ENCODE measurements at regions of chr22 and their contacts with region 1.

Region 1: GRCh38 chr22:37498289-37498909 is 12.2 kb upstream of the MFNG start:
- DNase-seq: peak; percentile 62 to 71 (median 71)
- H3K4me3 ChIP-seq: no peak overlapping the region
- H3K27ac ChIP-seq: no peak overlapping the region
- H3K4me1 ChIP-seq: peaks cover 0 to 22% (median 19%) of the 10 kb centered on the region in 4 experiments
- H3K27me3 ChIP-seq: no peaks in the 10 kb centered on the region

Region 2: DNA sequence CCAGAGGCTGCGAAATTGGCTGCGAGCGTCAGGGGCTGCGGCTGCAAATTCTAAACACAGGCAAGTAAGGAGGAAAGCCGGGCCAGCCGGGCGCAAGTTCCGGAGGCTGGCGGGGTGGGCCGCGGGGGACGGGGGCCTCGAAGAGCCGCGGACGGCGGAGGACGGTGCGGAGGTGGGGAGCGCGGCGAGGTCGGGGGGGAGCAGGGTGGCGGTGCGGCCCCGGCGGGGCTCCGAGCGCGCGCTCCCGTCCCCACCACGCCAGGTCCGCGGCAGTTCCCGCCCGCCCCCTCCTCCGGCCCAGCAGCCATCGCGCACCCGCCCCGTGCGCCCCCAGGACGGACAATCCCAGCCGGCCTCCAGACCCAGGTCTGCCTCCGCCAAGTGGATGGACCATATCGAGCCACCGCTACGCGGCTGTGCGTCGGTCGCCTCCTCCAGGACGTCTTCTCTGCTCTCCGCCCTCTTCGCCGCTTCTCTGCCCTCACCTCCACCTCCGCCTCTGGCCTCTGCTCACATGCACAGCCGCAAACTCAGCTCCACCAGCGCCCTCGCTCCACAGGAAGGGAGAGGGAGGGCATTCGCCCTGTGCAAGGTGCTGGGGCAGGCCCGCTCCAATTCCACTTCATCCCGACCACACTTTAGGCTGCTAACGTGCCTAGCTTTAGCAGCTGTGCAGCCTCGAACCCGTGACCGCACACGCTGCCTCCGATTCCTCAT is 78.3 kb before region 1 on chr22:
- CTCF ChIA-PET with region 1: no interaction called
- POLR2A ChIA-PET with region 1: no interaction called
- DNase-seq: peak in 2 of 3 donors; percentile 51 to 54
- H3K4me3 ChIP-seq: peak overlapping the region in 4 of 7 experiments; percentile 35 to 66 (median 58)
- H3K27ac ChIP-seq: no peak overlapping the region
- H3K4me1 ChIP-seq: peaks cover 0 to 41% (median 34%) of the 10 kb centered on the region in 4 experiments
- H3K27me3 ChIP-seq: peaks cover 0 to 53% (median 20%) of the 10 kb centered on the region in 5 experiments

Region 3: GRCh38 chr22:37486224-37486845 is 12.1 kb before region 1 on chr22 and contains the start of gene MFNG:
- CTCF ChIA-PET with region 1: interaction called, 26 read pairs
- POLR2A ChIA-PET with region 1: interaction called, 3 read pairs
- DNase-seq: peak; percentile 61 to 89 (median 81)
- H3K4me3 ChIP-seq: peak within 1 kb of the TSS; percentile 41 to 93 (median 81)
- H3K27ac ChIP-seq: peak within 1 kb of the TSS; percentile 77 to 87
- H3K4me1 ChIP-seq: peaks cover 3 to 63% (median 56%) of the 10 kb centered on the region in 4 experiments
- H3K27me3 ChIP-seq: no peaks in the 10 kb centered on the region

Region 4: GRCh38 chr22:37544955-37545699 is 46.7 kb after region 1 on chr22:
- CTCF ChIA-PET with region 1: no interaction called
- POLR2A ChIA-PET with region 1: no interaction called
- DNase-seq: peak; percentile 54 to 69 (median 61)
- H3K4me3 ChIP-seq: no peak overlapping the region
- H3K27ac ChIP-seq: no peak overlapping the region
- H3K4me1 ChIP-seq: peaks cover 0 to 25% (median 22%) of the 10 kb centered on the region in 4 experiments
- H3K27me3 ChIP-seq: peaks cover 0 to 26% (median 9%) of the 10 kb centered on the region in 5 experiments

Region 5: DNA sequence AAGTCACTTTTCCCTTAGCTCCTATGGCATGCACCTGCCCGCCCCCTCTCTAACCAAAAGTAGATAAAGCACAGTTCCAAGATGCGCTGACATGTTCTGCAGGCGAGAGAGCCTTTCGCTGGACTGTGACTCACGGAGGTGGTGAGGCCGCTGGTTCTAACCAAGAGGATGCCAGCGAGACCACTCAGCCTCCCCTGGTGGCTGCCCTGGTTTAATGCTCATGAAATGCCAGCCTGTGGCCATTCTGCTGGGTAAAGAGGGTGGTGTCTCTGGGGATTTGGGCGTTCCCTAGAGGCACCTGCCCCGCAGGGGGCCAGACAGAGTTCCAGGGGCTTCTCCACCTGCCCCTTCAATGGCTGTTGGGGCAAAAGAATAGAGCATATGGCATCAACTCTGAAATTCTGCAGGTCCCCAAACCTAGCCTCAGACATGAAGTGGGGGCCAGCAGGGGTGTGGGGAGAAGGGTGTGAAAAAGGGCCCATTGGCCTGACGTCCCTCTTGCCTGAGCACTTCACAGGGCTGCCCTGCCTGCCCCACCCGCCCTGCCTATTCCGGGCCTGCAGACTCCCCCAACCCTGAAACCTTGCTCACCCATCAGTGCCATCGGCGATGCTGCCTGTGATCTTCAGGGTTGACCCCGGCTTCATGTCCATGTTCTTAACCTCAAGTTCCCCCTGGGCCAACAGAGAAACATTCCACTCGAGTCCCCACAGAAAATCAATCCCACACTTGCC is 73.0 kb after region 1 on chr22:
- CTCF ChIA-PET with region 1: no interaction called
- POLR2A ChIA-PET with region 1: no interaction called
- DNase-seq: peak; percentile 25 to 57 (median 46)
- H3K4me3 ChIP-seq: no peak overlapping the region
- H3K27ac ChIP-seq: no peak overlapping the region
- H3K4me1 ChIP-seq: peaks cover 3 to 24% (median 18%) of the 10 kb centered on the region in 4 experiments
- H3K27me3 ChIP-seq: peaks cover 0 to 10% (median 3%) of the 10 kb centered on the region in 5 experiments